Aorta (tissue), 5 donors: ENCODE measurements at regions of chr15 and their contacts with region 1.

Region 1: GRCh38 chr15:65832549-65833364 is 36.5 kb upstream of the RAB11A start:
- DNase-seq: peak; percentile 89 to 90
- ATAC-seq: peak; percentile 94
- H3K4me3 ChIP-seq: peak overlapping the region in 1 of 2 donors; percentile 11
- H3K27ac ChIP-seq: peak overlapping the region; percentile 61 to 79
- H3K4me1 ChIP-seq: peaks cover 2 to 3% of the 10 kb centered on the region in 2 donors
- H3K27me3 ChIP-seq: no peaks in the 10 kb centered on the region

Region 2: GRCh38 chr15:65773386-65774111 is 59.2 kb before region 1 on chr15:
- intact Hi-C with region 1: no loop called
- DNase-seq: no peak
- ATAC-seq: no peak
- H3K4me3 ChIP-seq: no peak overlapping the region
- H3K27ac ChIP-seq: no peak overlapping the region
- H3K4me1 ChIP-seq: no peaks in the 10 kb centered on the region
- H3K27me3 ChIP-seq: no peaks in the 10 kb centered on the region

Region 3: GRCh38 chr15:65792130-65792987 is 40.4 kb before region 1 on chr15 and contains the start of gene DENND4A:
- intact Hi-C with region 1: loop called (anchors 2 kb)
- DNase-seq: peak; percentile 99
- ATAC-seq: peak; percentile 98
- H3K4me3 ChIP-seq: peak within 1 kb of the TSS; percentile 65 to 86
- H3K27ac ChIP-seq: peak within 1 kb of the TSS; percentile 62 to 92
- H3K4me1 ChIP-seq: no peaks in the 10 kb centered on the region
- H3K27me3 ChIP-seq: no peaks in the 10 kb centered on the region
- total RNA-seq, gene DENND4A: 30.4 to 41.3 TPM

Region 4: GRCh38 chr15:65869127-65869953 is 36.6 kb after region 1 on chr15 and contains the start of gene RAB11A:
- intact Hi-C with region 1: loop called (anchors 2 to 5 kb)
- DNase-seq: peak; percentile 97 to 98
- ATAC-seq: peak; percentile 99
- H3K4me3 ChIP-seq: peak within 1 kb of the TSS; percentile 82 to 93
- H3K27ac ChIP-seq: peak within 1 kb of the TSS; percentile 85 to 94
- H3K4me1 ChIP-seq: no peaks in the 10 kb centered on the region
- H3K27me3 ChIP-seq: no peaks in the 10 kb centered on the region
- total RNA-seq, gene RAB11A: 149 to 156 TPM

Region 5: GRCh38 chr15:65896236-65896635 is 63.5 kb after region 1 on chr15:
- intact Hi-C with region 1: no loop called
- DNase-seq: no peak
- ATAC-seq: no peak
- H3K4me3 ChIP-seq: no peak overlapping the region
- H3K27ac ChIP-seq: no peak overlapping the region
- H3K4me1 ChIP-seq: no peaks in the 10 kb centered on the region
- H3K27me3 ChIP-seq: no peaks in the 10 kb centered on the region